ENCODE measurements at regions of chr17 and their contacts with region 1.

Region 1: DNA sequence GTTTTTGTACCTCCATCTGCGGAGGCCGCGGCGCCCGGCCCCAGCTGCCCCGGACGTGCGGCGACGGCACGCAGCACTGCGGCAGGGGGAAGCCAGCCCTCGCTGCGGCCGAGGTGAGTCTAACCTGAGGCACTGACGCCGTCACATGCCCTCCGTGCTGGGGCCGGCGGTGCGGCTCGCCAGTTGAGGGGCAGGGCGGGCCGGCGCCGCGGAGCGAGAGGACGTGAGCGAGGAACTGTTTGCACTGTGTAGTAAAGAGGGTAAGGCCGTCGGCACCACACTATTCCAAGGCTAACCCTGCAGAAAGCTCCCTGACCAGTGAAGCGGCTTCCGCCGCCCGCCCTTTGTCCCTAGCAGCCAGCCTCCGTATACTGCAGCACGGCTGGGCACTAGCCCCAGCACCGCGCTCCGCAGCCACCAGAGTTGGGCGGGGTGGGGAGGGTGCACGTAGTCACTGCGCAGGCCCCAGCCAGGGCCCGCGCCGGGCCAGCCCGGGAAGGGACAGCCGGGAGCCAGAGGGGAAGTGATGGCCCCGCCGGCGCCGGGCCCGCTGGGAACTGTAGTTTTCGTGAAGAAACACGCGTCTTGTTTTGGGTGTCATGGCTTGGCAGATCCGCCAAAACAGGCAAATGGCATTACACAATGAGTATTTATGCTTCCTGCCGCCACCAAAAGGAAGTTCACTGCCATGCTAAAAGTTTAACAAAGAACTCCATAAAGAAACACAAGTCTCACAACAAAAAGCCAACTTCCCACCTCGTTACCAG is 580 bp upstream of the KANSL1 start:
- DNase-seq: peak; percentile 98
- H3K4me3 ChIP-seq: peak overlapping the region; percentile 93 to 100 (median 98)
- H3K27ac ChIP-seq: peak overlapping the region; percentile 100
- H3K4me1 ChIP-seq: peaks cover 0 to 56% (median 44%) of the 10 kb centered on the region in 4 donors
- H3K27me3 ChIP-seq: no peaks in the 10 kb centered on the region
- CTCF ChIP-seq: peak in 1 of 4 experiments; percentile 27
- EP300 ChIP-seq: no peak
- POLR2A ChIP-seq: peak; percentile 35 to 74

Region 2: GRCh38 chr17:45794840-45795239 is 399.0 kb before region 1 on chr17:
- intact Hi-C with region 1: no loop called
- DNase-seq: no peak
- H3K4me3 ChIP-seq: no peak overlapping the region
- H3K27ac ChIP-seq: no peak overlapping the region
- H3K4me1 ChIP-seq: peaks cover 0 to 6% (median 6%) of the 10 kb centered on the region in 4 donors
- H3K27me3 ChIP-seq: peaks cover 0 to 89% (median 37%) of the 10 kb centered on the region in 3 donors
- CTCF ChIP-seq: no peak
- EP300 ChIP-seq: no peak
- POLR2A ChIP-seq: no peak

Region 3: GRCh38 chr17:46044286-46044928 is 149.4 kb before region 1 on chr17:
- intact Hi-C with region 1: loop called (anchors 1 kb)
- DNase-seq: peak; percentile 92
- H3K4me3 ChIP-seq: no peak overlapping the region
- H3K27ac ChIP-seq: peak overlapping the region; percentile 46 to 72 (median 66)
- H3K4me1 ChIP-seq: peaks cover 0 to 49% (median 38%) of the 10 kb centered on the region in 4 donors
- H3K27me3 ChIP-seq: no peaks in the 10 kb centered on the region
- CTCF ChIP-seq: peak; percentile 85 to 97 (median 96)
- EP300 ChIP-seq: peak in 1 of 4 donors; percentile 0
- POLR2A ChIP-seq: no peak

Region 4: GRCh38 chr17:46115699-46116098 is 78.1 kb before region 1 on chr17:
- intact Hi-C with region 1: loop called (anchors 5 kb)
- DNase-seq: no peak
- H3K4me3 ChIP-seq: peak overlapping the region in 1 of 4 donors; percentile 13
- H3K27ac ChIP-seq: peak overlapping the region; percentile 23 to 74 (median 55)
- H3K4me1 ChIP-seq: peaks cover 0 to 85% (median 66%) of the 10 kb centered on the region in 4 donors
- H3K27me3 ChIP-seq: no peaks in the 10 kb centered on the region
- CTCF ChIP-seq: no peak
- EP300 ChIP-seq: no peak
- POLR2A ChIP-seq: no peak

Region 5: DNA sequence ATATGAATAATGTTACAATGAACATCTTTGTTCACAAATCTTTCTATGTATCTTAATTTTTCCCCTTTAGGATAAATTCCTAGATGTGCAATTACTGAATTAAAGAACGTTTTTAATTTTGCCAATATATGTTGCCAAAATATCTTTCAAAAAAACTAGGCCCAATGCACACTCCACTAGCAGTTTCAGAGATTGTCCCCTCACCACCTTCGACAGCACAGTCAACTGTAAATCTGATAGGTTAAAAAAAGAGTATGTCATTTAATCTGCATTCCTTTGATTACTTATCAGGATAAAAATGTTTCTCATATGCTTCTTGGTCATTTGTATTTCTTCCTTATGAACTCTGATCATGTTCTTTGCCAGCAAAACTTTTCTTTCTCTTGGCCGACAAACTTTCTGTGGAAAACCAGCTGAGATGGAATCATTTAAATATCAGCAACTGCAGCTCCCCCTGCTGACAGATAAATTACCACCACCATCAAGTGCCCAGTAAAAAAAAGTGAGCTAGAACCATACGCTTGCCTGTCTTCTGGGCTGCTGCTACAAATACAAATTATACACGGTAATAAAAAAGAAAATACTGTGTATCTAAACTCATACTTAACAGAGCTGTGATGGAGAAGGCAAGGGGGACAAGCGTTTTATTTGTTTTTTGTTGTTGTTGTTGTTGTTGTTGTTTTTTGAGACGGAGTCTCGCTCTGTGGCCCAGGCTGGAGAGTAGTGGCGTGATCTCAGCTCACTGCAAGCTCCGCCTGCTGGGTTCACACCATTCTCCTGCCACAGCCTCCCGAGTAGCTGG is 19.0 kb after region 1 on chr17:
- intact Hi-C with region 1: loop called (anchors 2 kb)
- DNase-seq: peak; percentile 81
- H3K4me3 ChIP-seq: no peak overlapping the region
- H3K27ac ChIP-seq: peak overlapping the region; percentile 15 to 70 (median 60)
- H3K4me1 ChIP-seq: peaks cover 0 to 38% (median 34%) of the 10 kb centered on the region in 4 donors
- H3K27me3 ChIP-seq: no peaks in the 10 kb centered on the region
- CTCF ChIP-seq: peak; percentile 73 to 92 (median 78)
- EP300 ChIP-seq: no peak
- POLR2A ChIP-seq: no peak

Region 6: DNA sequence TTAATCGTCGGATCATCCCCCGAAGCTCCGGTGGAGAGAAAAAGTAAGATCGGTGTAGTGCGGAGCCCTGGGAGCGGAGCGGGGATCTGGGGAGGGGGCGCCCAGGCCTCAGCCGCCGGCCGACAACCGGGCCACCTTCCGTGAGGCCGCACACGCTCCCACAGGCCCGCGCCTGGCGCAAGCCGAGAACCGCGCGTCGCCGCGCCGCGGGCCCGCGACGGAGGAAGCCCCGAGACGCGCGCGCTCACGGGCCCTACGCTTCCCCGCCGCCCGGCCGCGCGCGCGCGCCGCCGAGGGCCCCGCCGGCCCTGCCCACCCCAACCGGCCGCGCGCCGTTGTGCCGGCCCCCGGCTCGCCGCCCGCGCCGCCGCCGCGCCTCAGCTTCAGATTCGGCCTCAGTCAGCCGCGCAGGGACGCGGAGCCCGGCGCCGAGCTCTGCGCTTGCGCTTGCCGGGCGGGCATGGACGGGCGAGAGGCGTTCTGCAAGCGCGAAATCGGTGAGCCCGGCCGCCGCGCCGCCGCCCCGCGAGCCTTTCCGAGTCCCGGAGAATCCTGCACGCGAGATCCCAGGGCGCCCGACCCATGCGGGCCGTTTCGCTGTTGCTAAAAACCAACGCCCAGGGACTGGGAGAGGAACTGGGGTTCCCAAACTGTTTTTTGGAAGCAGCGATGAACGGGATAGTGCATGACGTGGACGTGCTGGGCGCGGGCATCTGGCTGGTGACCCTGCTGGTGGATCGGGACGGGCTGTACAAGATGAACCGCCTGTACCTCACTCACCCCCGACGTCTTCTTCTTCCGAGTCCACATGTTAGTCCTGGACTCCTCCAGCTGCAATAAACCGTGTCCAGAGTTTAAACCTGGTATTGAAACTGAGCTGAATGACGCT is 73.1 kb after region 1 on chr17:
- intact Hi-C with region 1: loop called (anchors 10 kb)
- DNase-seq: peak; percentile 91
- H3K4me3 ChIP-seq: peak overlapping the region; percentile 53 to 70 (median 64)
- H3K27ac ChIP-seq: peak overlapping the region; percentile 92 to 97 (median 96)
- H3K4me1 ChIP-seq: peaks cover 0 to 19% (median 15%) of the 10 kb centered on the region in 4 donors
- H3K27me3 ChIP-seq: no peaks in the 10 kb centered on the region
- CTCF ChIP-seq: peak in 1 of 4 experiments; percentile 11
- EP300 ChIP-seq: no peak
- POLR2A ChIP-seq: peak; percentile 23 to 33